Activated T-helper 1 cell treated with anti-CD3 and anti-CD28 coated beads, Interleukin-12 subunit alpha, Interleukin-12 subunit beta, Interleukin-2, Interleukin-4 antibody, amounts not matched to agents 30 ng/mL and 10 ng/mL and 1 ng/mL, durations not matched to agents 14 hours and 24 hours and 36 hours (primary cell): ENCODE measurements at regions of chr5 and their contacts with region 1.

Region 1: GRCh38 chr5:159336991-159337955 is 7.0 kb upstream of the IL12B start:
- DNase-seq: peak; percentile 66
- H3K4me3 Mint-ChIP-seq: peak overlapping the region; percentile 43
- H3K27ac Mint-ChIP-seq: peak overlapping the region; percentile 50
- H3K4me1 Mint-ChIP-seq: peaks cover 87% of the 10 kb centered on the region
- H3K27me3 Mint-ChIP-seq: no peaks in the 10 kb centered on the region

Region 2: GRCh38 chr5:158796812-158797497 is 540.3 kb before region 1 on chr5:
- intact Hi-C with region 1: no loop called
- DNase-seq: no peak
- H3K4me3 Mint-ChIP-seq: no peak overlapping the region
- H3K27ac Mint-ChIP-seq: no peak overlapping the region
- H3K4me1 Mint-ChIP-seq: no peaks in the 10 kb centered on the region
- H3K27me3 Mint-ChIP-seq: peaks cover 6% of the 10 kb centered on the region

Region 3: DNA sequence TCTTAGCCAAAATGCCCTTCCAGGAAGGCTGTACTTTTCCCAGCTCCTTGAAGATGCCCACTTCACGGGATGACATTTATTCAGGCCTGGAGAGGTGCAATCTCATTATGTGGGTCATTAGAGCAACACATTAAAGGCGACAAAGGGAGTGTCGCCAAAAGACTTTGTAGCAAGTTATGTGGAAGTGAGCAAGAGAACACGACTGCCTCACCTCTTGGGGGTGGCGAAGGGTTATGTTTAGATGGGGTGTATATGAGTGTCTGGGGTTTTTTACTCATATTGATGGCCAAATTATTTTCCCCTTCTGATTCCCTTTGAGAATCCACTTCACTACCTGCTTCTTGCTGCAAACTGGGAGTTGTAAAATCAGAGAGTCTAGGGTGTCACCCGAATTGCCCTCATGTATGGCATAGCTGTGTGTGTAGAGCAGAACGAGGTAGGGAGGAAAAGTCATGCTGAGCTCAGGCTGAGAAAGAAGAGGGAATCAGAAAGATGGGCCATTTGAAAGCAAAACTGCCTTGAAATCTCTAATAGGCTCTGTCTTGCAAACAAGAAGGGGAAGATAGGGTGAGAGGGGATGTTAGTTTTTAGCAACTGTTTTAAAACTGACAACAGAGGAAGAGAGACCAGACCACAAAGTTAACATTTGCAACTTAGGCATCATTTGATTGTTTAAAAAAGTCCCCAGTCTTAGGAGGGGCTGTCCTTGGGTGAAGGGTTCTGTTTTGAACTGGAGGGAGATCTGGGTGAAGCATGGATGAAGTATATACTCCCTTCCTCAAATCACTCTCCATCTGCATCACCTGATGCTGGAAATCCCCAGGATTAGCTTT is 90.1 kb after region 1 on chr5:
- intact Hi-C with region 1: loop called (anchors 1 kb)
- DNase-seq: no peak
- H3K4me3 Mint-ChIP-seq: no peak overlapping the region
- H3K27ac Mint-ChIP-seq: peak overlapping the region; percentile 13
- H3K4me1 Mint-ChIP-seq: peaks cover 66% of the 10 kb centered on the region
- H3K27me3 Mint-ChIP-seq: peaks cover 3% of the 10 kb centered on the region

Region 4: GRCh38 chr5:159773062-159773924 is 436.0 kb after region 1 on chr5:
- intact Hi-C with region 1: loop called (anchors 2 kb)
- DNase-seq: peak; percentile 79
- H3K4me3 Mint-ChIP-seq: peak overlapping the region; percentile 49
- H3K27ac Mint-ChIP-seq: peak overlapping the region; percentile 44
- H3K4me1 Mint-ChIP-seq: peaks cover 33% of the 10 kb centered on the region
- H3K27me3 Mint-ChIP-seq: peaks cover 29% of the 10 kb centered on the region